Posterior cingulate gyrus (tissue), 11 donors: ENCODE measurements at regions of chr3 and their contacts with region 1.

Region 1: DNA sequence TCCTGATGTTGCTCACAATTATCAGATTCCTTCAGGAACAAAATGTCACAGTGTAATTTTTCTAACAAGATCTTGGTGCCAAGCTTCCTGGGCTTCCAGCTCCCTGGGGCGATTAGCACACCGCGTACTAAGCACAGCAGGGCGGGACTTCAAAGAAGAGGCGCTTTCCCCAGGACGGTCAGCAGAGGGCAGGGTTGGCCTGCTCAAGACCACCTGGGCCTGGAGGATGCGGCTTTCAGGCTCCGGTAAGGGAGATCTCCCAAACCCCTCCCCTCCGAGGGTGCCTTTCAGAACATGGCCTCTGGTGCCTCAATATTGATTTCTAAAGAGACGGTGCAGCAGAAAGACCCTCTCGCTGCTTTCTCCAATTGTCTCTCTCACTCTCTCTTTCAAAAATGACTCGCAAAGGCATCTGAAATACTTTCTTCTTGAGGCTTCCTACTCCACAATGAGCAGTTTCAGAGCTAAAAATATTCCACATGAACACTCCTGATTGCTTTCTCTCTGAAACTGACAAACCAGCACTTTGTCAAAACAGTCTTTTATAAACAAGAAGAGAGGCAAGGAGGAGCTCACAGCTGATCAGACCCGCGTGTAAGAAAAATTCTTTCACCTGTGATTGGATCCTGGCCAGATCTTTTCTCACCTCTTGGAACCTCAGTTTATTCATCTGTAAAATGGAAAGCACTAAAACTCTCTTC is 154.0 kb downstream of the ADAMTS9 start:
- DNase-seq: peak; percentile 76 to 98 (median 88)

Region 2: GRCh38 chr3:65170390-65171042 is 636.7 kb after region 1 on chr3:
- intact Hi-C with region 1: loop called (anchors 5 kb)
- DNase-seq: peak in 7 of 10 donors; percentile 28 to 85 (median 39)

Region 3: GRCh38 chr3:65245133-65246063 is 711.6 kb after region 1 on chr3:
- intact Hi-C with region 1: loop called (anchors 5 kb)
- DNase-seq: no peak

Region 4: DNA sequence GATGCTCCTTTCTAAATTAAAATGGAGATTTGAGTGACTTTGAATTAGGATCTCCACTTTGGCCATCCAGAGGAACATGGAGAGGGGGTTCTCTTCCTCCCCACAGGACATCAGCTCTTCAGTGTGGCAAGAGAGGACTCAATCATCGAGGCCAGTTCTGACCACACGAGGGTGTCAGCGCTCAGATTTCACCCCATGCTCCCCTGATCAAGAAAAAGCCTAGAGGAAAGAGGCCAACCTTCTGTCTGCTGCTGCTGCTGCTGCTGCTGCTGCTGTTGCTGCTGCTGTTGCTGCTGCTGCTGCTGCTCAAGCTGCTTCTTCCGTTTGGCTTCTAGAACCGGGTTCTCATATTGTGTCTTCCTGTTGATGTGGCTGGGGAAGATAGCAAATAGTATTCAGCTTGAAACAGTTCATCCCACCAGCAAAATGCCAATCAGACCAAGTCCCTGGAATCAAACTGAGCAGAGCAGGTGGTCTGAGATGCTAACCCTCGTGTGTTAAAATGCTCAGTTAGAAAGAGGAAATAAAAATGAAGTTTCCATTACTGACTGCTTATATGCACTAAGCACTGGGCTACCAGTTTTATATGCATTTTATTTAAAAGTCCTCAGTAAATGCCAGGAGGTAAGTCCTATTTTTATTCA is 906.0 kb after region 1 on chr3:
- intact Hi-C with region 1: loop called (anchors 1 kb)
- DNase-seq: peak in 9 of 10 donors; percentile 41 to 95 (median 68)

Region 5: DNA sequence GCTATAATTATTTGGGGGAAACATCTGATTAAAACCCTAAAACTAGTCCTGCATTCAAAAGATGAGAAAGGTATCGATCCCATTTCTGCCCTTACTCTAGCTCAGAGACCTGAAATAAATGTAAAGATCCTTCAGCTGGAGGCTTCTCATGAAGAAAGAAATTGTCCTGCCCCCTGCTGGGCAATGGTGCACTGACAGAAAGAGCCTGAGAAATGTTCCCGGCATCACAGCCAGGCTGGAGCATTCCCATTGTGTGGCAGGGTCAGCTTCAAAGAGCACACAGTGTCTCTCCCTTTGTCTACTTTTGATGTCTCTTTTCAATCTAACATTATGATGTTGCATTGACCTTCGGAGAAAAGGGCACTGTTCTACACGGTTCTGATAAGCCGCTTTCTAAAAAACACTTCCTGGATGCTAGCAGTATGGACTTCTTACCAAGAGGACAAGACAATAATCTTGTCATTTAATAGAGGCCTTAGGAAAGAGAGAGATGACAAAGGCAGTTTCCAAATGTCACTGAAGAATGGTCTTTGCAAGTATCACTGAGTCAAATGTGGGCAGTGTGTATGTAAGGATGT is 1217.4 kb after region 1 on chr3:
- intact Hi-C with region 1: loop called (anchors 10 kb)
- DNase-seq: peak; percentile 51 to 96 (median 83)